HCT116 (cell line): ENCODE measurements at regions of chr10 and their contacts with region 1.

Region 1: DNA sequence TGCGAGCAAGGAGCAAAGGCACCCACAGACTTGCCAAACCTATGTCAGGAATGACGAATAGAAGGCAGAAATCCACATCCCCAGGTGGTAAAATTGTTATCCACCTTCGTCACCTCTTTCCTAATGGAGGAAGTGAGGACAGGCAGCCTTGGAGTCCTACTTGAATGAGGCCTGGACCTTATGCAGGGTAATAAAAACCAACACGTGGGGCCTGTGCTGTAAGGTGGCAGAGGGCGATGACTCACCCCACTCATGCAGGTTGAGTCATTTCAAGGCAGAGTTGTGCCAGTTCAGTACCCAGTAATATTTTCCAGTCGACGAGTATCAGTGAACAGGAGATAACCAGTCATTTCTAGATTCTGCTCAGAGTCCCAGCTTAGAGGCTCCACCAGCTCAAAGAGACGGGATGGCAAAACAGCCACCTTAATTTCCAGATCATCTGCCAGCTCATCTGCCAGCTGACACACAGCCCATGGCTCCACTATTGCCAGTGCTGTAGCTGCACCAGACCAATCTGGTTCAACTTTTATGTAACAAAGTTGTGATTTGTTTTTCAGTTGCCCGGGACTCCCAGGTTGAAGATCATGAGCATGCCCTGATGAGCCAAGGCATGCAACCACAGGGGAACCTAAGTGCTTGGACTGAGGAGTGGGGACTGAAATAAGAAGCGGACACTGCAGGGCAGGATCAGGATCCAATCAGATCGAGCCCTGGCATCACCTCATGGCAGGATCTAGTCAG is 176.2 kb upstream of the ITGB1 start:
- DNase-seq: peak; percentile 99
- ATAC-seq: peak; percentile 83
- H3K4me3 ChIP-seq: peak overlapping the region in 1 of 2 experiments; percentile 9; a peak in 2 of 4 replicates
- H3K27ac ChIP-seq: peak overlapping the region; percentile 84
- H3K4me1 ChIP-seq: peaks cover 45 to 71% of the 10 kb centered on the region in 2 experiments
- H3K27me3 ChIP-seq: no peaks in the 10 kb centered on the region
- CTCF ChIP-seq: no peak
- POLR2A ChIP-seq: no peak
- RAD21 ChIP-seq: peak; percentile 41; the same call in 1 of the 2 replicates

Region 2: DNA sequence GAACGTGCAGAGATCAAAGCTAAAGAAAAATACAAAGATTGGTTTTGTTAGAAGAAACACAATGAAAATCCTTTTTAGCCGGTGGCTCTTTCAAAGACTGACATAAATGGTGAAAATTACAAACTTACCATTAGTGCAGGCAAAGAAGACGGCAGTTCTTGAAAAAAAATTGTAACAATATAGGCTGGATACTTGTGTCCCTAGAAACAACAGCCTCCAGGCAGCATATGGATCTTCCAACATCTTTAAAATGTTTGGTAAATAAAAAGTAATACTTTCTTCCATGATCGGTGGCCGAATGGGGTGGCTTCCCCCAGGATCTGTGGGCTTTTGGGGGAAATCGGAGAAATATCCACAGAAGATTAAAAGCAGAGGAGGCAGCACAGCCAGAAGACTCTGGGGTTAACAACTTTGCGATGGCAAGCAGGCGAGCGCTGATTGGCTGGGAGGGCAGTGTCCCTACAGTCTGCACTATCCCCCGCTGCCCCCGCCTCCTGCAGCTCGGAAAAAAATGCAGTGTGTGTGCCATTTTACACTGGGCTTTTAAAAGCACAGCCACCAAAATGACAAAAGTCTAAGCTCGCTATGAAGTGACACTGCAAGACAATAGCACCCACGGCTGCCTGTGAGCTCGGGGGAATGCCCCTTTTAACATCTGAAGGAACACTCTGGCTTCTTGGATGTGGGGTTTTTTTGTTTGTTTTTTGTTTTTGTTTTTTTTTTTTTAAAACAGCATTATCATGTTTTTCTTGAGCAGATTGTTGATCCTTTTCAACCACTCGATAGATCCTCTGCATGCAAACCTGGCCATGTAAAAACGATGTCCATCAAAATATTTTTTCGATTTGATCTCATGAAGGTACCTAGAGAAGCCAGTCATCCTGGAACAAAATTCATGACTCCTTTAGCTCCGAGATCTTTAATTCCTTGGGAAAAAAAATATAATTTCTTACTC is 755.5 kb before region 1 on chr10:
- CTCF ChIA-PET with region 1: no interaction called
- POLR2A ChIA-PET with region 1: no interaction called
- RAD21 ChIA-PET with region 1: no interaction called
- intact Hi-C with region 1: loop called (anchors 10 kb)
- DNase-seq: peak; percentile 79
- ATAC-seq: peak; percentile 94
- H3K4me3 ChIP-seq: peak overlapping the region; percentile 62 to 75
- H3K27ac ChIP-seq: peak overlapping the region; percentile 62
- H3K4me1 ChIP-seq: peaks cover 14 to 34% of the 10 kb centered on the region in 2 experiments; a peak in 3 of 4 replicates
- H3K27me3 ChIP-seq: no peaks in the 10 kb centered on the region
- CTCF ChIP-seq: no peak
- POLR2A ChIP-seq: peak; percentile 62
- RAD21 ChIP-seq: no peak

Region 3: GRCh38 chr10:32795598-32796183 is 338.5 kb before region 1 on chr10:
- CTCF ChIA-PET with region 1: no interaction called
- POLR2A ChIA-PET with region 1: no interaction called
- RAD21 ChIA-PET with region 1: no interaction called
- intact Hi-C with region 1: loop called (anchors 2 kb)
- DNase-seq: peak; percentile 16
- ATAC-seq: peak; percentile 61
- H3K4me3 ChIP-seq: no peak overlapping the region
- H3K27ac ChIP-seq: no peak overlapping the region
- H3K4me1 ChIP-seq: no peaks in the 10 kb centered on the region
- H3K27me3 ChIP-seq: no peaks in the 10 kb centered on the region
- CTCF ChIP-seq: peak; percentile 59 to 82 (median 80); a peak in 5 of 6 replicates
- POLR2A ChIP-seq: no peak
- RAD21 ChIP-seq: peak; percentile 94

Region 4: DNA sequence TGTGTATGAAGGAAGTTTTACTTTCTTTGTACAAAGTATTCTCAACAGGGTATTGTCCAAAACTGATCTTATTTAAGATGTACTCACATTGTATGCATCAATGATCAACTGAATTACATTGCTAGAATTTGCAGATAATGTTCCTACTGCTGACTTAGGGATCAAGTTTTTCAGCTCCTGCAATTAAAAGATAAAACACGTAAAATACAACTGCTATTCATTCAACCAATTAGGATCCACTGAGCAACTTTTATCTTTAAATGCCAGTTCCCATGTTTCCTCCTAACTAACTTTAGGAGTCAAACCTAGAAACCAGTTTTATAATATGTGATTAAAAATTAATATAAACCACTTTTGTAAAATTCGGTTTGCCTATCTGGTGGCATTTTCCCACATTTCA is 212.0 kb before region 1 on chr10:
- CTCF ChIA-PET with region 1: no interaction called
- POLR2A ChIA-PET with region 1: no interaction called
- RAD21 ChIA-PET with region 1: no interaction called
- intact Hi-C with region 1: no loop called
- DNase-seq: no peak
- ATAC-seq: no peak
- H3K4me3 ChIP-seq: no peak overlapping the region
- H3K27ac ChIP-seq: no peak overlapping the region
- H3K4me1 ChIP-seq: no peaks in the 10 kb centered on the region
- H3K27me3 ChIP-seq: no peaks in the 10 kb centered on the region
- CTCF ChIP-seq: no peak
- POLR2A ChIP-seq: no peak
- RAD21 ChIP-seq: no peak

Region 5: DNA sequence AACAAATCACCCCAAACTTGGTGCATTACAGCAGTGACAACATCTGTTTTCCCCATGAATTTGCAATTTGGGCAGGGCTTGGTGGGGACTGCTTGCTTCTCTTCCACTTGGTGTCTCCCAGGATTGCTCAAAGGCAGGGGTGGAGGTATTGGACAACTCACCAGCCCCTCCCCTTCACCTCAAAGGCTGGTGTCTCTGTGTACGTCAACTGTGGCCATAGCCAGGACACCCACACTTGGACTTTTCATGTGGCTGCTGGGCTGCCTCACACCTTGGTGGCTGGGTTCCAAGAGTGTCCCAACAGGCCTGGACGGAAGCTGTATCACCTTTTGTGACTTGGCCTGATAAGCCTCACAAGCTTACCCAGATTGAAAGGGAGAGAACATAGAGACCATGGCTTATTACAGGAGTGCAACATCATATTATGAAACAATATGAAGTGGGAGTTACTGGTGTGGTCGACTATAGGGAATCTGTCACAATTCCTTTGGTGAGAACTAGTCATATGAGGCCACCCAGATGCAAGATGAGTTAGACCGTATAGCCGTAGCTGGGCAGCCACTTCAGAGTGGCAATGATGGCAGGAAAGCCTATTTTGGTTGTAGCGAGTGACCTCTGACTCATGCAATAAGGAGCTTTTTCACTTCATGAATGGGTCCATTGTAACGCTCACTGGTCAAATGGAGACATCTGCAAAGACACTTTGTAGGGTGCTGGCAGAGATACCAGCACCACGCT is 11.4 kb after region 1 on chr10:
- CTCF ChIA-PET with region 1: no interaction called
- POLR2A ChIA-PET with region 1: interaction called, 10 read pairs
- RAD21 ChIA-PET with region 1: no interaction called
- intact Hi-C with region 1: no loop called
- DNase-seq: peak; percentile 82
- ATAC-seq: peak; percentile 86
- H3K4me3 ChIP-seq: peak overlapping the region in 1 of 2 experiments; percentile 11; a peak in 1 of 4 replicates
- H3K27ac ChIP-seq: peak overlapping the region; percentile 31
- H3K4me1 ChIP-seq: peaks cover 22 to 45% of the 10 kb centered on the region in 2 experiments
- H3K27me3 ChIP-seq: no peaks in the 10 kb centered on the region
- CTCF ChIP-seq: no peak
- POLR2A ChIP-seq: no peak
- RAD21 ChIP-seq: no peak; the same call in 1 of the 2 replicates

Region 6: DNA sequence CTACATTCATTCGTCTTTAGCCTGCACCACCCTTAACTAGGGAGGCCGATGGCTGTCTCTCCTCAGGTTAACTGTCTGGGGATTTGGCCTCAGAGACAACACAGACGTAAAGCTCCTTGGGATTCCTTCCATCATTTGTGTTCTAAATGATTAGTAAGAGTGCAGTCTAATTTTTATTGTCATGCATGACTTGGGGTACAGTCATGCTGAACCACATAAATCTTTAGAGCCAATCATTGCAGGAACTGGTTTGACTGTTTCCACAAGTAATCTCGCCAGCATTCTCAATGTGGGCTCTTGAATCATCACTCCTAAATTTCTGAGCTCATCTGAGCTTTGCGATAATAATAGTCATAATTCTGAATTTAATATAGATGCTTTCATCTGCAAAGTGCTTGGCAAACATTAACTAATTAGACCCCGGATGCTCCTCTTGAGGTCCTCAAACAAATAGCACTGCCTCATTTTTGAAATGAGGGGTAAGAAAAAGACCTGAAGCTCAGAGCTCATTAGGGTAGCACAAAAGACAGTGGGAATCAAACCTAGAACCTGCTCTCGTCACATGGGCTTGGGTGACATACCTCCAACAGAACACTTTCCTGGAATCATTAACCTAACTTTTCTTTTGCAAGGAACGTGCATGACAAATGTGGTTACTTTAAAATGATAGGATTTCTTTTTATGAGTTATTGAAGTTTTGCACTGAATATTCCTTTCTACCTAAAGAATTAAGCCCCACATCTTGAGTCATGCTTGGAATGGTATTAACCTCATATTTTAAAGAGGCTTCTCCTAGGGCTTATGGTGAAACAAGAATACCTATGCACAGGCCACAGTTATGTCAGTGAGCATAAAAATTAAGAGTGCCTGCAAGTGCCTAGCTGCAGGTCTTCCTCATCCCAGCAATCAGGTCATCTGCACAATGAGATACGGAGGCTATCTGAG is 319.2 kb after region 1 on chr10:
- CTCF ChIA-PET with region 1: no interaction called
- POLR2A ChIA-PET with region 1: no interaction called
- RAD21 ChIA-PET with region 1: no interaction called
- intact Hi-C with region 1: no loop called
- DNase-seq: no peak
- ATAC-seq: no peak
- H3K4me3 ChIP-seq: no peak overlapping the region
- H3K27ac ChIP-seq: no peak overlapping the region
- H3K4me1 ChIP-seq: no peaks in the 10 kb centered on the region
- H3K27me3 ChIP-seq: no peaks in the 10 kb centered on the region
- CTCF ChIP-seq: no peak
- POLR2A ChIP-seq: no peak
- RAD21 ChIP-seq: no peak